ENCODE measurements at regions of chr6 and their contacts with region 1.

Region 1: GRCh38 chr6:117482240-117483003 is at the start of gene DCBLD1:
- DNase-seq: peak; percentile 72
- ATAC-seq: peak; percentile 86
- H3K4me3 Mint-ChIP-seq: peak within 1 kb of the TSS; percentile 75
- H3K27ac Mint-ChIP-seq: peak within 1 kb of the TSS; percentile 27
- H3K4me1 Mint-ChIP-seq: peaks cover 15% of the 10 kb centered on the region
- H3K27me3 Mint-ChIP-seq: peaks cover 50% of the 10 kb centered on the region
- total RNA-seq, gene DCBLD1: 1.2 to 1.6 TPM

Region 2: GRCh38 chr6:116680975-116681808 is 801.2 kb before region 1 on chr6 and contains the start of gene KPNA5:
- CTCF ChIA-PET with region 1: no interaction called
- POLR2A ChIA-PET with region 1: no interaction called
- intact Hi-C with region 1: loop called in 1 of 2 experiments (anchors 10 kb)
- DNase-seq: peak; percentile 96
- ATAC-seq: peak; percentile 96
- H3K4me3 Mint-ChIP-seq: peak within 1 kb of the TSS; percentile 98
- H3K27ac Mint-ChIP-seq: peak within 1 kb of the TSS; percentile 99
- H3K4me1 Mint-ChIP-seq: peaks cover 31% of the 10 kb centered on the region
- H3K27me3 Mint-ChIP-seq: no peaks in the 10 kb centered on the region
- total RNA-seq, gene KPNA5: 10.4 to 13.6 TPM

Region 3: DNA sequence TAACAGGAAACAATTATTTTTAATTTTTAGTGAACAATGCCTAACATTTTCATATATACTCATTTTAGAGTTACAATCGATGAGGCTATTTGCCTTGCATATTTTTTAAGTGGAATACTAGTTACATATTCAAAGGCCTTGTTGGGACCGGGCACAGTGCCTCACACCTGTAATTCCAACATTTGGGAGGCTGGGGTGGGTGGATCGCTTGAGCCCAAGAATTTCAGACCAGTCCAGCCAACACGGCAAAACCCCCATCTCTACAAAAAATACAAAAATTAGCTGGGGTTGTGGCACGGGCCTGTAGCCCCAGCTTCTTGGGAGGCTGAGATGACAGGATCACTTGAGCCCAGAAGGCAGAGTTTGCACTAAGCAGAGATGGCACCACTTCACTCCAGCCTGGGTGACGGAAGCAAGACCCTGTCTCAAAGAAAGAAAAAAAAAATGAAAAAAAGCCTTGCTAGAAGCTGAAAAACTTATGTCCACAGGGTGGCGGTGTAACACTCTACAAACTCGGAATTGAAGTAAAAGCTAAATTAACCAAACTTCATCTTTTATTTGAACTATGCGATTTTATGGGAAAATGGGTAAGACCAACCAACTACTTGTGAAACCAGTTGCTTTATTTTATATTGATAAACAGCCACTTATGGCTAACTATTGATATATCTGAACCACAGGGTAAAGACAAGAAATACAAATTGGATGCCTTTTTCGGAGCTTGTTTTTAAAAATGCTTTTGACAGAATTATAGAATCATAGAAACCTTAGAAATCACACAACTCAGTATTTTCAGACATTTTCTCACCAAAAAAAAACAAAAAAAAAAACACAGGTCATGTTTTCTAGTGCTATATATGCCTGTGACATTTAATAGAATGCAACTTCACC is 32.6 kb before region 1 on chr6:
- CTCF ChIA-PET with region 1: interaction called, 8 read pairs
- POLR2A ChIA-PET with region 1: no interaction called
- intact Hi-C with region 1: loop called in 1 of 2 experiments (anchors 2 kb)
- DNase-seq: peak; percentile 72
- ATAC-seq: no peak
- H3K4me3 Mint-ChIP-seq: no peak overlapping the region
- H3K27ac Mint-ChIP-seq: no peak overlapping the region
- H3K4me1 Mint-ChIP-seq: no peaks in the 10 kb centered on the region
- H3K27me3 Mint-ChIP-seq: peaks cover 12% of the 10 kb centered on the region

Region 4: GRCh38 chr6:117547688-117548621 is 65.5 kb after region 1 on chr6:
- CTCF ChIA-PET with region 1: interaction called, 5 read pairs
- POLR2A ChIA-PET with region 1: no interaction called
- intact Hi-C with region 1: loop called (anchors 1 to 2 kb)
- DNase-seq: peak; percentile 60
- ATAC-seq: peak; percentile 42
- H3K4me3 Mint-ChIP-seq: peak overlapping the region; percentile 67
- H3K27ac Mint-ChIP-seq: peak overlapping the region; percentile 62
- H3K4me1 Mint-ChIP-seq: peaks cover 39% of the 10 kb centered on the region
- H3K27me3 Mint-ChIP-seq: peaks cover 11% of the 10 kb centered on the region

Region 5: GRCh38 chr6:117555882-117556498 is 73.6 kb after region 1 on chr6:
- CTCF ChIA-PET with region 1: interaction called, 4 read pairs
- POLR2A ChIA-PET with region 1: no interaction called
- intact Hi-C with region 1: loop called in 1 of 2 experiments (anchors 1 kb)
- DNase-seq: peak; percentile 69
- ATAC-seq: no peak
- H3K4me3 Mint-ChIP-seq: no peak overlapping the region
- H3K27ac Mint-ChIP-seq: no peak overlapping the region
- H3K4me1 Mint-ChIP-seq: peaks cover under 1% of the 10 kb centered on the region
- H3K27me3 Mint-ChIP-seq: no peaks in the 10 kb centered on the region